Activated CD4-positive, alpha-beta T cell treated with anti-CD3 and anti-CD28 coated beads for 36 hours (primary cell): ENCODE measurements at regions of chr3 and their contacts with region 1.

Region 1: GRCh38 chr3:134485718-134486576 is at the starts of genes ANAPC13 and CEP63:
- DNase-seq: peak; percentile 95
- ATAC-seq: peak; percentile 86
- H3K4me3 Mint-ChIP-seq: peak within 1 kb of the TSS; percentile 92
- H3K27ac Mint-ChIP-seq: peak within 1 kb of the TSS; percentile 98
- H3K4me1 Mint-ChIP-seq: peaks cover 47% of the 10 kb centered on the region
- H3K27me3 Mint-ChIP-seq: no peaks in the 10 kb centered on the region
- total RNA-seq, gene ANAPC13: 35.9 to 39.7 TPM
- total RNA-seq, gene CEP63: 21.3 to 25.9 TPM

Region 2: DNA sequence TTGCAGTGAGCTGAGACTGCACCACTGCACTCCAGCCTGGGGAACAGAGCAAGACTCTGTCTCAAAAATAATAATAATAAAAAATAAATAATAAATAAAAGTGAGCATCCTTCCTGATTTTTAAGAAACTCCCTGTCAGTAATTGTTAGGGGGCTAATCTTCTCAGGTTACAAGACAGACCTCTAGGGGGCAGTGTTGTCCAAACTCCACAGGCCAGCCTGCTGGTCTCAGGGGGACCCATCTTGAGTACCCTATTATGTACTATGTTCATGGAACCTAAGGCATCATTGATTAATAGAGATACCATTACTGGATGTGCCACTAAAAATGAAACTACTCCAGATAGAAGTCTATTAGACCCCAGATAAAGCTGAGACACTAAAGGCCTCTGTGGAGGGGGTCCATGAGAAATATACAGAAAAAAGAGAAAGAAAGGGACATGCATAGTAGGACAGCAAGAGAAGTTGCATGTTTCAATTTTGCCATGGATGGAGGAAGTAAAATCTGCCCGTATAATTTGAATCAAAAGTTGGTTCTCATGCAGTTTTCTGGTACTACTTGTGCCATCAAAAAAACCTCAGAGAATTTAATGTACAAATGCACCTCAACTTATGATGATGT is 997.9 kb before region 1 on chr3:
- CTCF ChIA-PET with region 1: no interaction called
- POLR2A ChIA-PET with region 1: no interaction called
- intact Hi-C with region 1: loop called in 1 of 2 experiments (anchors 10 kb)
- DNase-seq: peak; percentile 69
- ATAC-seq: no peak
- H3K4me3 Mint-ChIP-seq: no peak overlapping the region
- H3K27ac Mint-ChIP-seq: no peak overlapping the region
- H3K4me1 Mint-ChIP-seq: peaks cover 49% of the 10 kb centered on the region
- H3K27me3 Mint-ChIP-seq: no peaks in the 10 kb centered on the region

Region 3: GRCh38 chr3:133730993-133731392 is 755.0 kb before region 1 on chr3:
- CTCF ChIA-PET with region 1: no interaction called
- POLR2A ChIA-PET with region 1: no interaction called
- intact Hi-C with region 1: no loop called
- DNase-seq: no peak
- ATAC-seq: no peak
- H3K4me3 Mint-ChIP-seq: no peak overlapping the region
- H3K27ac Mint-ChIP-seq: no peak overlapping the region
- H3K4me1 Mint-ChIP-seq: no peaks in the 10 kb centered on the region
- H3K27me3 Mint-ChIP-seq: peaks cover 31% of the 10 kb centered on the region

Region 4: GRCh38 chr3:133805527-133806475 is 680.1 kb before region 1 on chr3 and contains the start of gene SRPRB:
- CTCF ChIA-PET with region 1: no interaction called
- POLR2A ChIA-PET with region 1: no interaction called
- intact Hi-C with region 1: loop called (anchors 1 to 5 kb)
- DNase-seq: peak; percentile 98
- ATAC-seq: peak; percentile 99
- H3K4me3 Mint-ChIP-seq: peak within 1 kb of the TSS; percentile 93
- H3K27ac Mint-ChIP-seq: peak within 1 kb of the TSS; percentile 98
- H3K4me1 Mint-ChIP-seq: peaks cover 39% of the 10 kb centered on the region
- H3K27me3 Mint-ChIP-seq: peaks cover 6% of the 10 kb centered on the region
- total RNA-seq, gene SRPRB: 42.7 to 66.2 TPM

Region 5: GRCh38 chr3:134205451-134205850 is 280.5 kb before region 1 on chr3:
- CTCF ChIA-PET with region 1: no interaction called
- POLR2A ChIA-PET with region 1: no interaction called
- intact Hi-C with region 1: no loop called
- DNase-seq: no peak
- ATAC-seq: no peak
- H3K4me3 Mint-ChIP-seq: no peak overlapping the region
- H3K27ac Mint-ChIP-seq: no peak overlapping the region
- H3K4me1 Mint-ChIP-seq: peaks cover 5% of the 10 kb centered on the region
- H3K27me3 Mint-ChIP-seq: no peaks in the 10 kb centered on the region

Region 6: GRCh38 chr3:134250717-134251220 is 235.2 kb before region 1 on chr3 and contains the start of gene RYK:
- CTCF ChIA-PET with region 1: interaction called, 3 read pairs
- POLR2A ChIA-PET with region 1: no interaction called
- intact Hi-C with region 1: loop called (anchors 1 kb)
- DNase-seq: peak; percentile 84
- ATAC-seq: peak; percentile 78
- H3K4me3 Mint-ChIP-seq: peak within 1 kb of the TSS; percentile 98
- H3K27ac Mint-ChIP-seq: peak within 1 kb of the TSS; percentile 98
- H3K4me1 Mint-ChIP-seq: peaks cover 68% of the 10 kb centered on the region
- H3K27me3 Mint-ChIP-seq: peaks cover 3% of the 10 kb centered on the region
- total RNA-seq, gene RYK: 23.5 to 24.0 TPM

Region 7: DNA sequence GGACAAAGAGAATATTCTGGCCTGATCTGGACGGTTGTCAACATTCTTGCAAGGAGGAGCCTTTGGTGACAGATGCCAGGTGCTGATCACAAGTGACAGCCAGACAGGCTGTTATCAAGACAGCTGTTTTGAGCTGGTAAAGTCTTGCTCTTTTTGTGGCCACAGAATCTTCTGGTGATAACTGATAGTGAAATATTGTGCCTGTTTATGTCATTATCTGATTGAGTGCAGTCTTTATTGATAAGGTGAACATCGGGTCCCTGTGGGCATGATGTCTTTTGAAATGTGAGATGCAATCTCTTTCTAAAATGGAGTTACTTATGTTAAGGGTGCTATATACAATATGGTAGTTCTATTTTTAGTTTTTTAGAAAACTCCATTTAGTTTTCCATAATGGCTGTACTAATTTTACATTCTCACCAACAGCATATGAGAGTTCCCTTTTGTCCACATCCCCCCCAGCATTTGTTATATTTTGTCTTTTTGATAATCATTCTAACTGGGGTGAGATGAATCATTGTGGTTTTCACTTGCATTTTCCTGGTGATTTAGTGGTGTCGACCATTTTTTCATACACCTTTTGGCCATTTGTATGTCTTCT is 10.6 kb after region 1 on chr3:
- CTCF ChIA-PET with region 1: interaction called, 16 read pairs
- POLR2A ChIA-PET with region 1: interaction called, 4 read pairs
- intact Hi-C with region 1: no loop called
- DNase-seq: no peak
- ATAC-seq: peak; percentile 60
- H3K4me3 Mint-ChIP-seq: no peak overlapping the region
- H3K27ac Mint-ChIP-seq: no peak overlapping the region
- H3K4me1 Mint-ChIP-seq: peaks cover 53% of the 10 kb centered on the region
- H3K27me3 Mint-ChIP-seq: no peaks in the 10 kb centered on the region